Activated CD8-positive, alpha-beta T cell treated with anti-CD3 and anti-CD28 coated beads, Interleukin-2, amount 10 ng/mL, durations not matched to agents 7 days and 5 days (primary cell): ENCODE measurements at regions of chr1 and their contacts with region 1.

Region 1: DNA sequence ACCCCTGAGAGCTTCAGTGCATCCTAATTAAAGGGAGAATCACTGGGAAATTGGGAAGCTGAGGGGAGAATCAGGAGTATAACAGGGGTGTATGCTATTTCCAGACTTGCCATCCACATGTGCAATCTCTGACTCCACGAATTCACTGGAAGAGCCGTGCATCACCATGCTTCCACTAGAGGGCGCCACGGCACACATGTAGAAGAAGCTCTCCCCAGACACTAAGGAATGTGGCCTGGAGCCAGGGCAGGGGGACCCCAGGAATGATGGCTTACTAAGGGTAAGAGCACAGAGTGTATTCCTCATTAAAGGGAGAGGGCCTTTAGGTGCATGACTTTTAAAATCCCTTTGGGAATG is 81.5 kb downstream of the ABCA4 start:
- DNase-seq: peak; percentile 66
- ATAC-seq: no peak
- H3K4me3 Mint-ChIP-seq: no peak overlapping the region
- H3K27ac Mint-ChIP-seq: no peak overlapping the region
- H3K4me1 Mint-ChIP-seq: no peaks in the 10 kb centered on the region
- H3K27me3 Mint-ChIP-seq: peaks cover 22% of the 10 kb centered on the region

Region 2: DNA sequence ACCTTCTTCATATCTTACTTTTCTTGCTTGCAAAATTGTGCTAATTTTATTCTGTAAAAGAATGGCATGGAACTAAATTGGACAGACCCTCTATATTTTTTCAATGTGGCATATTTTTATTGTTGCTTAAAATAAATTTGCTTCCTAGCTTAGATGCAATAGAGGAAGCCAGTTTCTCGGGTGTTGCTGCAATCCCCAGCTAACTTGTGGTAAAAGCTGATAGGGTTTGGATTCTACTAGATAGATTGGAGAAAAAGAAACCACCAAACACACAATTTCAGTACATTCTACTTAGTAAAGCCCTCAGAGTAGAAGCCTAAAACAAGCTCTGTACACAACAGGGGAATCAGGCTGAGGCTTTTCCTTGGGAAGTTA is 80.8 kb before region 1 on chr1:
- CTCF ChIA-PET with region 1: no interaction called
- POLR2A ChIA-PET with region 1: no interaction called
- DNase-seq: no peak
- ATAC-seq: no peak
- H3K4me3 Mint-ChIP-seq: no peak overlapping the region
- H3K27ac Mint-ChIP-seq: no peak overlapping the region
- H3K4me1 Mint-ChIP-seq: no peaks in the 10 kb centered on the region
- H3K27me3 Mint-ChIP-seq: no peaks in the 10 kb centered on the region

Region 3: GRCh38 chr1:93969371-93969770 is 70.1 kb before region 1 on chr1:
- CTCF ChIA-PET with region 1: no interaction called
- POLR2A ChIA-PET with region 1: no interaction called
- DNase-seq: no peak
- ATAC-seq: no peak
- H3K4me3 Mint-ChIP-seq: no peak overlapping the region
- H3K27ac Mint-ChIP-seq: no peak overlapping the region
- H3K4me1 Mint-ChIP-seq: no peaks in the 10 kb centered on the region
- H3K27me3 Mint-ChIP-seq: peaks cover 2% of the 10 kb centered on the region

Region 4: GRCh38 chr1:94000510-94001282 is 38.8 kb before region 1 on chr1:
- CTCF ChIA-PET with region 1: no interaction called
- POLR2A ChIA-PET with region 1: no interaction called
- DNase-seq: no peak
- ATAC-seq: no peak
- H3K4me3 Mint-ChIP-seq: no peak overlapping the region
- H3K27ac Mint-ChIP-seq: no peak overlapping the region
- H3K4me1 Mint-ChIP-seq: no peaks in the 10 kb centered on the region
- H3K27me3 Mint-ChIP-seq: peaks cover 14% of the 10 kb centered on the region

Region 5: DNA sequence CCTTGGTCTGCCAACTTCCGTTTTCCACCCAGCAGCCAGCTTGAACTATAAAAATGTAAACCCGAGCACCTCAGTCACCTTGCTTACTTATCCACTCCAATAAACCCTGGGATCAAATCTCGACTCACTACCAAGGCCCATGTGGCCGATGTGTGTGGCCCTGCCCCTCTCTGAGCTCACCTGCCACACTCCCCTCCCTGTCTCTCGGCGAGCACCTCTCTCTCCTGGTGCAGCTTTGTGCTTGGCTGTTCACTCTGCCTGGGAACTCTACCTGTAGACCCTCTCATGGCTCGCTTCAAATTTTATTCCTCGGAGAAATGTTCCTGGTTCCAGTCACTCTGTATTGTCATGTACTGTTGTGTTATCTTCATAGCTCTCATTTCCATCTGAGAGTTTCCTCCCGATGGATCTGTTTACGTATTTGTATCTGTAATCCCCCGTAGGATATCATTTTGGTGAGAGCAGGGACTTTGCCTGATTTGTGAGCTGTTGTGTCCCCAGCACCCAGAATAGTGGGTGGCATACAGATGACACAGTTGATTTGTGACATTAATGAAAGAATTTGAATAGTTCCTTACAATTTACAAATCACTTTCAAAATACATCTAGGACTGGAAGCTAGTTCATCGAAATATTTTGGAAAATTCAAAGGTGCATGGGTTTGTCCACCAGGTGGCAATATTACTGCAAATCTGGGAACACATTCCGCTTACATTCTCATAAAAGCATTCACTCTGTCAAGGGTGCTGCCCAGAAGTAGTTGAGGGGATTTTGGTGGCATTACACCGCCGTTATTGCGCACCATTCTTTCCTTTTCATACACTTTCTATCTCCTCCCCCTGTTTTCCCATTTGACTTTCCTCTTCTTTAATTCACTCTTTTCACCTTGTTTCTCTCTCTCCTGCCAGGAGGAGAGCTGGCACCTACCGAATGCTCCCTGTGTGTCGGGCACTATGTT is 13.8 kb before region 1 on chr1:
- CTCF ChIA-PET with region 1: interaction called, 76 read pairs
- POLR2A ChIA-PET with region 1: no interaction called
- DNase-seq: no peak
- ATAC-seq: no peak
- H3K4me3 Mint-ChIP-seq: no peak overlapping the region
- H3K27ac Mint-ChIP-seq: no peak overlapping the region
- H3K4me1 Mint-ChIP-seq: no peaks in the 10 kb centered on the region
- H3K27me3 Mint-ChIP-seq: peaks cover 15% of the 10 kb centered on the region

Region 6: DNA sequence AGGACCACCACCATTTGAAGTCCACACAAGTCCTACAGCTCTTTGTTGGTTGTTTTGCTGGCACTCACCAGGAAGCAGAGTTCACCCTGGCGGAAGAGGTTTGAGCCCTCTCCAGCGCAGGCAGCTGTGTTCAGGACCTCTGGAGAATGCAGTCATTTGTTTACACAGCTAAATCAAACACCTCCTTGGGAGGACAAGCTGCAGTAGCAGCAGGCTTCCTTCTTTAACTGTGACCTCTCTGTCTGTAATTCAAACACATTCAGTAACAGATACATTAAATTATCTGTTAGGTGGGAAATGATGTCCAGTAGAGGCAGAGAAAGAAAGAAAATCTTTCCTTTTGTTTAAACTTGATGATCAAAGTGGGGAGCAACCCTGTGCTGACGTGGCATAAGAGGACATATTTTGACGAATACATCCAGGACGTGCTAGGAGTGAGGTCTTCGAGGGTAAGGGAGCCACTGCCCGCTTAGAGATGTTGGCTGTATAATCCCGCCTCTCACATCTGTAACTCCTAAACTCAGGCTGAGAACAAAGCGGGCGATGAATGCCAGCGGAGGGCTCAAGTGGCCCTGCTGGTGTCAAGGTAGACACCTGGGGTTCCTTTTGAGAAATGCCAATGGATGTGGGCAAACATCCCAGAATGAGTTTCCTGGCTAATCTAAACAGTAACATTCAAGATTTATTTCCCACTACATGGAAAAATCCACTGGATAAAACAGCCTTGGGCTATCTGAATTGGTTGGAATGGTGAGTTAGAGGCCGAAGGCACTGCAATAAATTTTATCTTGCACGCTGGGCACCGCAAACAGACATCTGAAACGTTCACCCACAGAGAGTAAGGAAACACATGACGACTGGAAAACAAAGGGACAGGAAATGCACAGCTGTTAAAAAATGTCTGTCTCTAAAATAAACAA is 29.8 kb after region 1 on chr1:
- CTCF ChIA-PET with region 1: interaction called, 14 read pairs
- POLR2A ChIA-PET with region 1: no interaction called
- DNase-seq: no peak
- ATAC-seq: peak; percentile 27
- H3K4me3 Mint-ChIP-seq: no peak overlapping the region
- H3K27ac Mint-ChIP-seq: no peak overlapping the region
- H3K4me1 Mint-ChIP-seq: peaks cover 32% of the 10 kb centered on the region
- H3K27me3 Mint-ChIP-seq: no peaks in the 10 kb centered on the region

Region 7: GRCh38 chr1:94092210-94092613 is 52.7 kb after region 1 on chr1:
- CTCF ChIA-PET with region 1: no interaction called
- POLR2A ChIA-PET with region 1: no interaction called
- DNase-seq: peak; percentile 66
- ATAC-seq: peak; percentile 86
- H3K4me3 Mint-ChIP-seq: peak overlapping the region; percentile 13
- H3K27ac Mint-ChIP-seq: peak overlapping the region; percentile 79
- H3K4me1 Mint-ChIP-seq: peaks cover 43% of the 10 kb centered on the region
- H3K27me3 Mint-ChIP-seq: no peaks in the 10 kb centered on the region

Region 8: DNA sequence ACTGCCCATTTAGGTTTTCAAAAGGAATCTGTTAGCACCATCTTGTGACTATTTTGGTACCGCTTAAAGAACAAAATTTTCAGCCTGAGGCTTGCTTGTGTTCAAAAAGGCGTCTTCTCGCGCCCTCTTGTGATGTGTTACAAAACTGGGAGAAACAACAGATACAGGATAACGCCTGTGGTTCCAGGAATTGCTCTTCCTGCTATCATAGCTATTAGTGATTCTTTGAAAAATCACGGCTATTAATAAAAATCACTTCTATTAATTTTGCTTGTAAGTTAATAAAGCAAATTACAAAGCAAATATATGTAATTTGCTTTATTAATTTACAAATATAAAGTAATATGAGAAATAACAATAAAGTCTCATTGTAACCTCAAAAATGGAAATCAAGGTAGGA is 296.5 kb after region 1 on chr1:
- CTCF ChIA-PET with region 1: interaction called, 41 read pairs
- POLR2A ChIA-PET with region 1: no interaction called
- DNase-seq: peak; percentile 50
- ATAC-seq: no peak
- H3K4me3 Mint-ChIP-seq: no peak overlapping the region
- H3K27ac Mint-ChIP-seq: no peak overlapping the region
- H3K4me1 Mint-ChIP-seq: no peaks in the 10 kb centered on the region
- H3K27me3 Mint-ChIP-seq: peaks cover 9% of the 10 kb centered on the region